Lower leg skin (tissue), 4 donors: ENCODE measurements at regions of chr3 and their contacts with region 1.

Region 1: GRCh38 chr3:20039766-20040475 is at the start of gene KAT2B:
- DNase-seq: peak; percentile 62 to 95
- H3K4me3 ChIP-seq: peak within 1 kb of the TSS; percentile 84
- CTCF ChIP-seq: no peak
- POLR2A ChIP-seq: no peak
- total RNA-seq, gene KAT2B: 29.2 to 38.8 (median 31.0) TPM

Region 2: GRCh38 chr3:19748782-19749551 is 291.0 kb before region 1 on chr3:
- intact Hi-C with region 1: no loop called
- DNase-seq: no peak
- H3K4me3 ChIP-seq: no peak overlapping the region
- CTCF ChIP-seq: no peak
- POLR2A ChIP-seq: no peak

Region 3: GRCh38 chr3:19946832-19947548 is 92.9 kb before region 1 on chr3 and contains the start of gene RAB5A:
- intact Hi-C with region 1: loop called (anchors 5 kb)
- DNase-seq: peak; percentile 97 to 100
- H3K4me3 ChIP-seq: peak within 1 kb of the TSS; percentile 70
- CTCF ChIP-seq: peak in 1 of 3 donors; percentile 12
- POLR2A ChIP-seq: peak in 1 of 2 donors; percentile 45
- total RNA-seq, gene RAB5A: 110 to 168 (median 119) TPM

Region 4: GRCh38 chr3:20185701-20186598 is 146.0 kb after region 1 on chr3 and contains the start of gene SGO1:
- intact Hi-C with region 1: loop called (anchors 5 kb)
- DNase-seq: peak; percentile 99 to 100
- H3K4me3 ChIP-seq: peak within 1 kb of the TSS; percentile 31
- CTCF ChIP-seq: no peak
- POLR2A ChIP-seq: peak in 1 of 2 donors; percentile 14
- total RNA-seq, gene SGO1: 1.1 to 2.2 (median 1.9) TPM